Head of caudate nucleus (tissue), 42 donors: ENCODE measurements at regions of chr12 and their contacts with region 1.

Region 1: DNA sequence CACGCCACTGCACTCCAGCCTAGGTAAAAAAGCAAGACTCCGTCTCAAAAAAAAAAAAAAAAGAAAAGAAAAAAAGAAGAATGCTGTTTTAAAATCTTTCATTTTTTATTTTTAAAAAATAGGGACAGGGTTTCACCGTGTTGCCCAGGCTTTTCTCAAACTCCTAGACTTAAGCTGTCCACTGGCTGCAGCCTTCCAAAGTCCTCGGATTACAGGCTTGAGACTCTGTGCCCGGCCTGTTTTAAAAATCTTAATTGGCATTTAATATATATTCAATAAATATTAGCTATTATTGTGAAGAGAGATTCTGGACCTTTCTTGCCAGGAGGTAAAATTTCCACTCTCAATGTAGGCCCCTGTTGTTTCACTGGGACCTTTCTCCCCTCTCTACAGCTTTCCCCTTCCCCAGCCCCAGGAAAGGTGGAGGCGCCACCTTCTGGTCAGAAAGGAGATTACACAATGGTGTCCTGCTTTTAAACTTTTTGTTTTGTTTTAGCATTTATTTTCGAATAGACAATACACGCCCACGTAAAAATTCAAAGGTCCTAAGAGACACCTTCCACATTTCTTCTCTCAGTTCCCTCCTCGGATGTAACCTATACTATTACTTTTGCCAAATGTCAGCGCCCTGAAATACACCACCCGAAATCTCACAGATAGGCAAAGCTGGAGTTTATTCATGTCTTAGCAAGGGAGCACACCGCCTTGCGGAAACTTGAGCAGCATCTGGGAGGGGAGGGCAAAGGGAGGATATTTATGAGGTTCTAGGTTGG is 23.8 kb upstream of the PHC1 start:
- DNase-seq: peak in 36 of 42 donors; percentile 16 to 84 (median 53)

Region 2: DNA sequence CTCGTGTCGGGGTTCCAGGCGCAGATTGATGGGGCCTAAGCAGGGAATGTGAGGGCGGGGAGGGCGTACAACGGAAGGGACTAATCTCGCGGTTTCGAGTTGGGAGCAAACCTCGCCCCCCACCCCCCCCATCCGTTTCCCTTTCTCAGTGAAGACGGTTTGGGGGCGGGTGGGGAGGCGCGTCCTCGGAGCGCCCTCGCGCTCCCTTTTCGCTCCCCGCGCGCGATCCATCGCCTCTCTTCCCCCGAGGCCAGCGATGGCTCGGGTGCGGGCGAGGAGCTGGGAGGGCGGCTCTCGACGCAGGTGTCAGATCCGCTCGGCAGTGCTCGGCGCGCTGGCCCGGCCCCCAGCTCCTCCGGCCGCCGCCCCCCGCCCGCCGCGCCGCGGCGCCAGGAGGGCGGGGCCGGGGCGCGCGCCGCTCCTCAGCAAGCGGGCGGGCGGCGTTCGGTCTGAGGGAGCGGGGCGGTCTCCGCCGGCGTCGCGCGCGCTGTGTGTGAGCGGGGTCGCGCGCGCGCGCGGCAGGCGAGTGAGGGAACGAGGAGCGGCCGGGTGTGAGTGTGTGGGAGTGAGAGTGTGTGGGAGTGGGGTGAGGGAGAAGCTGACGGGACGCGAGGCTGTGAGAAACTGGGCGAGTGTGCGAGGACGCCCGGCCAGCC is 192.9 kb before region 1 on chr12 and contains the start of gene RIMKLB:
- intact Hi-C with region 1: loop called (anchors 10 kb)
- DNase-seq: peak in 41 of 42 donors; percentile 46 to 94 (median 84)

Region 3: DNA sequence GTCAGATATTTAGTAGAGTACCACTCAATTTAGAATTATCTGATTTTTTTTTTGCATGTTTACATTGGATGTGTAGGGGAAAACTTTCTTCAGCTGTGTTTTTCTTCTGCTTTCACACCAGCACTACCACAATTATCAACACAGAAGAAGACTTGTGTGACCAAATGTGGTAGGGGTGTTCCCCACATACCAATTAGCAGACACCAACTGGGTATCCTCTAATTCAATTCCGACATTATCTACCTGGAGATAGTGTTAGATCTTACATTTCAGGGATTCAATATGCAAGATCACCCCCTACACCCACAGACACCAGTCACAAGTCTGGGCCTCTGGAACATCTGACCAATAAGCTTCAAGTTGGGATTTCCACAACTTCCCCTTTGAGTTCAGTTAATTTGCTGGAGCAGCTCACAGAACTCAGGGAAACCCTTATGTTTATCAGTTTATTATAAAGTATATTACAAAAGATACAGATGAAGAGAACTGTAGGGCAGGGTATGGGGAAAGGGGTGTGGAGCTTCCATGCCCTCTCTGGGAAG is 94.8 kb after region 1 on chr12:
- intact Hi-C with region 1: no loop called
- DNase-seq: no peak

Region 4: GRCh38 chr12:9084417-9084816 is 193.9 kb after region 1 on chr12:
- intact Hi-C with region 1: no loop called
- DNase-seq: no peak

Region 5: DNA sequence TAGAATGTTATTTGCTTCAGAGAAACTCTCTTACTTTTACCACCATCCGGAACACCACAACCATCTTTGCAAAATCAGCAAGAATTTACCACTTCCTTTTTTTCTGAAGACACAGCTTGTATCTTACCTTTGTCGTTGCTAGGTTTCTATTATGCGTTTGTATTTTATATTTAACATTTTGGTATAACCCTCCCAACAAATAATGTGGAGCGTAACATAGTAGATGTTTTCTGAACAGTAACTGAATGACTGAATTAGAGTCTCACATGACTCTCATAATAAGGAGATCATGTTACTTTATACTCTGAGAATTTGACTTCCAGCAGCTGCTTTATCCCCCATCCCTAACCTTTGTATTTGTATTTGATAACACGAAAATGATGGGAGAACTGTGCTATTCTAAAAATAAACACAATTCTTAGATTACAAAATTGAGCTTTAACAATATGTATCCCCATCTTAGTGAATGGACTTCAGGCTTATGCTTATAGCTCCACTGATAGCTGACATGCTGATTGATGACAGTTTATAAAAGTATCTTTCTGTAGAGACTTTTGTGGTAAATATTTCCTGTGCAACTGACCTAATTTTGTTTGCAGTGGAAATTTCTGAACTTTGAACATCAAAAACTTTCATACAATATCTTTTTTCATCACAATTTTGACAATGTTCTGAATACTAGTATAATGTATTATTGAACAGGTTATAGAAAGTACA is 725.1 kb after region 1 on chr12:
- intact Hi-C with region 1: no loop called
- DNase-seq: no peak